CD4-positive, alpha-beta memory T cell (primary cell): ENCODE measurements at regions of chr19 and their contacts with region 1.

Region 1: DNA sequence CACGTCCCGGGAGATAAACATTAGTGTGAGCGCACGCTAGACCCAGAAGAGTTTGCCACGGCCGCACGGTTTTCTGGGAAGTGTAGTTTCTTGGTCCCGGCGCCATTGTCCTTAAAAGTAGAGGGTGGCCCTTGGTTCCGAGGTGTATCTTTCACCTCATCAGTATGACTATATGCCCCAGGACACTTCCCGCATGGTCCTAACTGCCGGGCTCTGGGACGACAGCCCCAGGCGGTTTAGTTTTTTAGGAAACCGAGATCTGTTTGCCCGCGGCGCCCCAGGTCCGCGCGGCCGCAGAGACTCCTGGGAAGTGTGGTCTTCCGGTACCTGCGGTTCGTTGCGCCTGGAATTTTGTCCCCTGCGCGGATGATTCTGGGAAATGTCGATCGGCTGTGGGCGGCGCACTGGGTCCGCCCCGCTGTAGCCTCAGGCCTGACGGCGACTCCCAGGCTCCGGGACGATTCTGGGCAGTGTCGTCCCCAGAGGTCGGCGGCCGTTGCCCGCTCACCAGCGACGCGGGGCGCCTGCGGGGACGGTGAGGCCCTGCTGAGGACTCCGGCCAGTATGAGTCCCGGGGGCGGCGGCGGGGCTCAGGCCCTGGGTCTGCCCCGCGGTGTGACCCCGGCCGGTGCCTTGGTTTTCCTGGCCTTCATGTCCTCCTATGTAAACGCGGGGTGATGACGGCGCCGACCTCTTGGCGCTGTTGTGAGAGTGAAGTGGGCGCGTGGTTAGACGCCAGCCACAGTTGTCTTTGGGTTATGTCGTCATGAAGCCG is at the start of gene ZNF181:
- DNase-seq: peak; percentile 78 to 88 (median 82)
- H3K4me3 ChIP-seq: peak within 1 kb of the TSS; percentile 79 to 93
- H3K4me3 Mint-ChIP-seq: peak within 1 kb of the TSS; percentile 94 to 98 (median 96)
- H3K27ac ChIP-seq: peak within 1 kb of the TSS; percentile 87
- H3K27ac Mint-ChIP-seq: peak within 1 kb of the TSS; percentile 94 to 99 (median 97)
- H3K4me1 ChIP-seq: peaks cover 26% of the 10 kb centered on the region
- H3K4me1 Mint-ChIP-seq: peaks cover 15 to 36% (median 26%) of the 10 kb centered on the region in 4 donors
- H3K27me3 ChIP-seq: no peaks in the 10 kb centered on the region
- H3K27me3 Mint-ChIP-seq: peaks cover 0 to 3% of the 10 kb centered on the region in 2 donors
- total RNA-seq, gene ZNF181: 23.6 to 24.0 TPM

Region 2: GRCh38 chr19:33887891-33888290 is 846.1 kb before region 1 on chr19:
- CTCF ChIA-PET with region 1: no interaction called
- POLR2A ChIA-PET with region 1: no interaction called
- intact Hi-C with region 1: no loop called
- DNase-seq: no peak
- H3K4me3 ChIP-seq: no peak overlapping the region
- H3K4me3 Mint-ChIP-seq: no peak overlapping the region
- H3K27ac ChIP-seq: no peak overlapping the region
- H3K27ac Mint-ChIP-seq: no peak overlapping the region
- H3K4me1 ChIP-seq: no peaks in the 10 kb centered on the region
- H3K4me1 Mint-ChIP-seq: peaks cover 3 to 12% (median 9%) of the 10 kb centered on the region in 4 donors
- H3K27me3 ChIP-seq: no peaks in the 10 kb centered on the region
- H3K27me3 Mint-ChIP-seq: peaks cover 2 to 5% of the 10 kb centered on the region in 2 donors

Region 3: GRCh38 chr19:34677386-34678084 is 56.5 kb before region 1 on chr19 and contains the start of gene ZNF302:
- CTCF ChIA-PET with region 1: interaction called, 8 read pairs
- POLR2A ChIA-PET with region 1: interaction called, 26 read pairs
- intact Hi-C with region 1: loop called (anchors 1 kb)
- DNase-seq: peak; percentile 93 to 95 (median 94)
- H3K4me3 ChIP-seq: peak within 1 kb of the TSS; percentile 73 to 94
- H3K4me3 Mint-ChIP-seq: peak within 1 kb of the TSS; percentile 95 to 100 (median 99)
- H3K27ac ChIP-seq: peak within 1 kb of the TSS; percentile 89
- H3K27ac Mint-ChIP-seq: peak within 1 kb of the TSS; percentile 97 to 100 (median 99)
- H3K4me1 ChIP-seq: peaks cover 21% of the 10 kb centered on the region
- H3K4me1 Mint-ChIP-seq: peaks cover 18 to 41% (median 23%) of the 10 kb centered on the region in 4 donors
- H3K27me3 ChIP-seq: no peaks in the 10 kb centered on the region
- H3K27me3 Mint-ChIP-seq: peaks cover 0 to 6% of the 10 kb centered on the region in 2 donors
- total RNA-seq, gene ZNF302: 50.8 to 53.3 TPM

Region 4: DNA sequence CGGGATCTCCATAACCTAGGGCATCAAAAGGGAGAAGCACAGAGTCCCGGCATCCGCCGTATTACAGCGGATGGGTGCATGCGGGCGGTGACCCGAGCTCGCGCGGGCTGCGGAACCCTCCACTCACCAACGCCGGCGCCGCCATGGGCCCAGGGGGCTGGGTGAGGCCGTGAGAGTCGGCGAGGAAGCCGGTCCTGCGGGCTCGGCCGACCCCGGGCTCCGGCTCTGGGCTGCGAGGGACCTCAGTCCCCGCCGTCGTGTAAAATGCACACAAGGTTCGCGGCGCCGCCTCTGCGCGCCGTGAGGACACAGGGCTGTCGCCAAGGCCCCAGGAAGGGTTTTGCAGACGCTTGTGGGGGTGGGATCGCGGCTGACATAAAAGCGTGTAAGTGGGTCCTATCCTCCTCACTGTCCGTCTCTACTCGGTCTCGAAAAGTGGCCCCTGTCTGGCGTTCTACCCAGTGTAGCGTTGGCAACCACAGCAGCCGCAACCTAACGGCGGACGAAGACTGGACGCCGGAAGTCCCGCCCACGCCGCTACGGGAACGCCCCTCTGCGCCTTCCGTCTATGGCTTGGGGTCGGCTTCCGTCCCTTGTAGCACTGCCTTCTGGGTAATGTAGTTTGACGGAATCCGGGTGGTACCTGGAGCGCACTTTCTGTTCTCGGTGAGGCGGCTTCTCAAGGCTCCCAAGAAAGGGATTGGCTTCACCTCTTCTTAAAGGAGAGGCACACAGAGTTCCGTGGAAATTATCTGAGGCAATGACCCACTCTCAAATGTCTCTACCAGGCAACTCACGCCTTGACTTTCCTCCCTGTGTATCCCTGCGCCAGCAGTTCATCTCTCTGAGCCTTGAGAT is 38.9 kb after region 1 on chr19 and contains the start of gene ZNF599:
- CTCF ChIA-PET with region 1: no interaction called
- POLR2A ChIA-PET with region 1: interaction called, 6 read pairs
- intact Hi-C with region 1: loop called (anchors 1 kb)
- DNase-seq: peak; percentile 87 to 89 (median 88)
- H3K4me3 ChIP-seq: peak within 1 kb of the TSS; percentile 55 to 93
- H3K4me3 Mint-ChIP-seq: peak within 1 kb of the TSS; percentile 93 to 98 (median 97)
- H3K27ac ChIP-seq: peak within 1 kb of the TSS; percentile 68
- H3K27ac Mint-ChIP-seq: peak within 1 kb of the TSS; percentile 86 to 98 (median 97)
- H3K4me1 ChIP-seq: peaks cover 9% of the 10 kb centered on the region
- H3K4me1 Mint-ChIP-seq: peaks cover 13 to 23% (median 19%) of the 10 kb centered on the region in 4 donors
- H3K27me3 ChIP-seq: no peaks in the 10 kb centered on the region
- H3K27me3 Mint-ChIP-seq: peaks cover 0 to 4% of the 10 kb centered on the region in 2 donors
- total RNA-seq, gene ZNF599: 10.6 to 10.7 TPM

Region 5: GRCh38 chr19:34794066-34794960 is 60.3 kb after region 1 on chr19:
- CTCF ChIA-PET with region 1: no interaction called
- POLR2A ChIA-PET with region 1: no interaction called
- intact Hi-C with region 1: no loop called
- DNase-seq: peak in 2 of 5 donors; percentile 3 to 5
- H3K4me3 ChIP-seq: no peak overlapping the region
- H3K4me3 Mint-ChIP-seq: peak overlapping the region in 4 of 8 donors; percentile 21 to 64 (median 58)
- H3K27ac ChIP-seq: no peak overlapping the region
- H3K27ac Mint-ChIP-seq: peak overlapping the region in 4 of 7 donors; percentile 22 to 85 (median 72)
- H3K4me1 ChIP-seq: peaks cover 11% of the 10 kb centered on the region
- H3K4me1 Mint-ChIP-seq: peaks cover 6 to 23% (median 15%) of the 10 kb centered on the region in 4 donors
- H3K27me3 ChIP-seq: no peaks in the 10 kb centered on the region
- H3K27me3 Mint-ChIP-seq: no peaks in the 10 kb centered on the region